Pancreas (tissue), 10 donors: ENCODE measurements at regions of chr1 and their contacts with region 1.

Region 1: DNA sequence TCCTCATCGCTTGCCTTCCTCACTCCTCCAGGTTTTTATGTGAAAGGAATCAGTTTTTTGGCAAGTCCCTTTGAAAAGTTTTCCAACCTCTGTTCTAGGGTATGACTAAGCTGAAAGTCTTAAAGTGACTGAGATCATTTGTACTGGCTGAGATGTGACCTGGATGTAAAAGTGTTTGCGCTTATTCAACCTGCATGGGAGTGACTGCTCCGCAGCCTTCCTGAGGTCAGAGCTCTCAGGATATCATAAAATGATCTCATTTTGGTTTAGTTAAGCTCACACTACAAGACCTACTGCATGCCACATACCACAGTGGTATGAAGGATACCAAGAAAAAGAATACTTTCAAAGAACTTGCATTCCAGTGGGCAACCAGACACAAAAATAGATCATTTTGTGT is 29.8 kb upstream of the TADA1 start:
- DNase-seq: no peak
- ATAC-seq: no peak
- H3K4me3 ChIP-seq: no peak overlapping the region
- H3K27ac ChIP-seq: no peak overlapping the region
- H3K4me1 ChIP-seq: peaks cover 0 to 3% (median 0%) of the 10 kb centered on the region in 3 donors
- H3K27me3 ChIP-seq: no peaks in the 10 kb centered on the region
- CTCF ChIP-seq: no peak

Region 2: GRCh38 chr1:167059045-167059808 is 153.3 kb after region 1 on chr1:
- intact Hi-C with region 1: loop called in 2 of 3 experiments (anchors 5 kb)
- DNase-seq: peak; percentile 35 to 93 (median 77)
- ATAC-seq: peak; percentile 57 to 90 (median 78)
- H3K4me3 ChIP-seq: no peak overlapping the region
- H3K27ac ChIP-seq: no peak overlapping the region
- H3K4me1 ChIP-seq: no peaks in the 10 kb centered on the region
- H3K27me3 ChIP-seq: no peaks in the 10 kb centered on the region
- CTCF ChIP-seq: peak; percentile 89 to 97 (median 95)